HepG2 (cell line): ENCODE measurements at regions of chr2 and their contacts with region 1.

Region 1: GRCh38 chr2:226799181-226799975 is at the start of gene IRS1:
- DNase-seq: peak; percentile 66
- ATAC-seq: peak; percentile 65
- H3K4me3 ChIP-seq: peak within 1 kb of the TSS; percentile 59 to 72 (median 62)
- H3K27ac ChIP-seq: peak within 1 kb of the TSS; percentile 96
- H3K4me1 ChIP-seq: peaks cover 79% of the 10 kb centered on the region
- H3K27me3 ChIP-seq: no peaks in the 10 kb centered on the region
- CTCF ChIP-seq: no peak
- EP300 ChIP-seq: peak in 1 of 2 experiments; percentile 50; a peak in 2 of 4 replicates
- POLR2A ChIP-seq: no peak
- RAD21 ChIP-seq: peak; percentile 93
- total RNA-seq, gene IRS1: 7.9 and 8.7 TPM in 2 replicates

Region 2: DNA sequence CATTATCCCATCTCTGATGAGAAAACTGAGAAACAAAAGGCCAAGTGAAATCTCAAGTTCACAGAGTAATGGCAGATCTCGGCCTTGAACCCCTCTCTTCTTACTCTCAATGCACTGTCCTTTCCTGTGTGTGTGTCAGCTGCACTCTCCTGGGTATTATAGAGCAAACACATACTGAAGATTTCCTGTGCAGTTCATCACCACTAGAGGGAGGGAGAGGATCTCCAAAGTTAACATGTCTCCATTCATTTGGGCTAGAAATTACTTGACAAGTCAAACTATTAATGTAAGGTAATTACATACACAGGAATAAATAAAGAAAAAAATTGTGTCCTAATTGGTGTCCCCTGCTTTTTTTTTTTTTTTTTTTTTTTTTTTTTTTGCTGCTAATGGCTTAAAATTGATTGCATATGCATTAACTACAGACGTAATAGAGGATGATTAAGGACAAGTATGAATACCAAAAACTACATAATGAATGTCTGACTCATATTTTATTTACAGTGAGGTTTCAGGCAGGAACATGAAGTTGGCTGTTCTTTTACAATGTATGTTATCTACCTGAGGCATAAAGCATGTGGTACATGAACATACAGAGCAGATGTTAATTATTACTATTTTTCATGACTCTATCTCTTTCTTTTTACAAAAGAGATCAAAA is 1130.6 kb before region 1 on chr2:
- CTCF ChIA-PET with region 1: interaction called, 7 read pairs
- POLR2A ChIA-PET with region 1: interaction called, 3 read pairs
- in situ Hi-C with region 1: loop called (anchors 5 kb)
- intact Hi-C with region 1: loop called (anchors 1 kb)
- DNase-seq: peak; percentile 65
- ATAC-seq: peak; percentile 95
- H3K4me3 ChIP-seq: no peak overlapping the region
- H3K27ac ChIP-seq: no peak overlapping the region
- H3K4me1 ChIP-seq: no peaks in the 10 kb centered on the region
- H3K27me3 ChIP-seq: no peaks in the 10 kb centered on the region
- CTCF ChIP-seq: peak; percentile 85
- EP300 ChIP-seq: no peak
- POLR2A ChIP-seq: no peak
- RAD21 ChIP-seq: 0 out of 2 replicates have a peak, but pooled peaks have one; percentile 31

Region 3: DNA sequence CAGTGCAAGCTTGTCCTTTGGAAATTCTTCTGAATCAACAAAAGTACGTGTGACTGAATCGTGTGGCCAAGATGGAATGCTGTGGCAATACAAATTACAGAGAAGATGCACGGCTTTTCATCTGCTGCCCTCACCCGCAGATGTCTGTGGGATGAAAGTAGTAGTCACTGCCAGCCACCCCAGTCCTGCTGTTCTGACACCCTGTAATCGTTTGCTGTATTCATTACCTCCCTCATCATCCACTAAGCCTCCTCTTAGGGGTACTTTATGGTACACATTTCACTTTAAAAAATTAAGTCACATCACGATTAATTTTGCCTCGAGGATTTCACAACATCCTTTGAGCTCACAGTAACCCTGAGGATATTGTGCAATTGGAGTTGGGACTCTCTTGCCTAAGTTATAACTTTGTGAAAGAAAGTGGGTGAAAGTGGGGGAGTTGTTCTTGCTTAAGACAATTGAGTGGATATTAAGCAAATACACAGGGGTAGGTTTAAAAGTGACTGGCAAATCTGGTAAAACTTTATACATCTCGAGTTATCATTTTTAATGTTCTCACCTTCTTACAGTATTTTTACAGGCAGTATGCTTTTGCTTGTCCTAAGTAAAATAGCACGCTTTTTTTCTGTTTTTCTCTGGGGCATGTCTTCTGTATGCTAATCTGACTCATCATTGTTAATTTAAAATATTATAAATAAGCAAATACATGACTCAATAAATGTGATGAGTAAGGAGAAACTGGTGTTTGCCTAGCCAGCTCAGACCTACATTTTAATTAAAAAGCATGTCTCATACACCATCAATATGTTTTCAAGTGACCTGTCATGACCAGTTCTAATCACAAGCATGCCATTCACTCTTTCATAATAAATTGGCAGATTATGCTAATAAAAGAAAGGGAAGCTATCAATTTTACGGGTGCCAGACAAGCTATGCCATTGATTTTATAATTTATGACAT is 680.6 kb before region 1 on chr2:
- CTCF ChIA-PET with region 1: no interaction called
- POLR2A ChIA-PET with region 1: interaction called, 13 read pairs
- in situ Hi-C with region 1: no loop called
- intact Hi-C with region 1: loop called (anchors 2 kb)
- DNase-seq: peak; percentile 81
- ATAC-seq: peak; percentile 81
- H3K4me3 ChIP-seq: peak overlapping the region; percentile 42 to 51 (median 42); a peak in 5 of 6 replicates
- H3K27ac ChIP-seq: peak overlapping the region; percentile 54
- H3K4me1 ChIP-seq: peaks cover 65% of the 10 kb centered on the region
- H3K27me3 ChIP-seq: no peaks in the 10 kb centered on the region
- CTCF ChIP-seq: no peak
- EP300 ChIP-seq: peak; percentile 88 to 94; a peak in 3 of 4 replicates
- POLR2A ChIP-seq: no peak
- RAD21 ChIP-seq: no peak

Region 4: DNA sequence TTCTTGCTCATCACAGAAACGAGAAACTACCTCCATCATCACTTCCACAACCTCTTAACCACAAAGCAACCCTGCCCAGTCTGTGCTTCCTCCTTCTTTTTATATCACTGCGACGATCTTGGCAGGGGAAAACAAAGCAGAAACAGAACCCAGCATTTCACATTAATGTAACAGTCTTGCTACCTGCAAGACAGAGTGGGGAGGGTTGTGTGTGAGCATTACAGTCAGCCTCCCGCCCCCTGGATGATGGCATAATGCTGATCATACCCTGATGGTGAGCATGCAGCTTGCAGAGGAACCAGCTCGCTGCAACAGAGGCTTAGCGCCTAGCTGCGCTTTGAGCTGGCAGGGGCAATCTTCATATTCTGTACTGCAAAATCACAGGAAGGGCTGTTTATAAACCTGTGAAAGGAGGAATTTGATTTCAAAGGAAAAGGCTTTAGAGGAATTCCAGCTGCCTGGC is 375.8 kb before region 1 on chr2:
- CTCF ChIA-PET with region 1: no interaction called
- POLR2A ChIA-PET with region 1: interaction called, 3 read pairs
- in situ Hi-C with region 1: no loop called
- intact Hi-C with region 1: loop called (anchors 10 kb)
- DNase-seq: no peak
- ATAC-seq: no peak
- H3K4me3 ChIP-seq: no peak overlapping the region
- H3K27ac ChIP-seq: no peak overlapping the region
- H3K4me1 ChIP-seq: peaks cover 24% of the 10 kb centered on the region
- H3K27me3 ChIP-seq: no peaks in the 10 kb centered on the region
- CTCF ChIP-seq: no peak
- EP300 ChIP-seq: no peak
- POLR2A ChIP-seq: no peak
- RAD21 ChIP-seq: no peak

Region 5: DNA sequence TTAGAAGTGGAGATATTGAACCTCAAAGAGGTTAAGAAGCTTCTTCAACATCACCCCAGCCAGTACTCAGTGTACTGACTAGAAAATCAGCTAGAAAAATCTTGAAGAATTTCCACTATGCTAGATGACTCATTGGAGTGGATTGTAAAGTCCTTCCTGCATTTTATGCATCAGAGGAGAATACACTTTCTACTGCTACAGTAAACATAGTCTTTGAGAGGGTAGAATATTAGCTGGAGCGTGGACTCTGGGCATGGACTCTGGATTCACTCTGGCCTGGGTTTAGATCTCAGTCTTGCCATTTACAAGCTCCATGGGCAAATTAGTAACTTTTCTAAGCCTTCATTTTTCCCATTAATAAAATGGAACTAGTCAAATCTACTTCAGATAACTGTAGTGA is 215.7 kb before region 1 on chr2:
- CTCF ChIA-PET with region 1: interaction called, 3 read pairs
- POLR2A ChIA-PET with region 1: interaction called, 19 read pairs
- in situ Hi-C with region 1: no loop called
- intact Hi-C with region 1: loop called (anchors 5 kb)
- DNase-seq: peak; percentile 94
- ATAC-seq: peak; percentile 98
- H3K4me3 ChIP-seq: no peak overlapping the region
- H3K27ac ChIP-seq: peak overlapping the region; percentile 68
- H3K4me1 ChIP-seq: peaks cover 65% of the 10 kb centered on the region
- H3K27me3 ChIP-seq: no peaks in the 10 kb centered on the region
- CTCF ChIP-seq: no peak
- EP300 ChIP-seq: peak in 1 of 2 experiments; percentile 94; a peak in 2 of 4 replicates
- POLR2A ChIP-seq: no peak
- RAD21 ChIP-seq: no peak; the same call in 1 of the 2 replicates

Region 6: GRCh38 chr2:226733189-226733858 is 66.1 kb before region 1 on chr2:
- CTCF ChIA-PET with region 1: no interaction called
- POLR2A ChIA-PET with region 1: interaction called, 53 read pairs
- in situ Hi-C with region 1: loop called (anchors 10 kb)
- intact Hi-C with region 1: loop called (anchors 1 kb)
- DNase-seq: peak; percentile 98
- ATAC-seq: peak; percentile 92
- H3K4me3 ChIP-seq: peak overlapping the region in 2 of 3 experiments; percentile 27 to 45; a peak in 2 of 6 replicates
- H3K27ac ChIP-seq: peak overlapping the region; percentile 82
- H3K4me1 ChIP-seq: peaks cover 75% of the 10 kb centered on the region
- H3K27me3 ChIP-seq: no peaks in the 10 kb centered on the region
- CTCF ChIP-seq: peak; percentile 31; the same call in 1 of the 2 replicates
- EP300 ChIP-seq: peak; percentile 87 to 99
- POLR2A ChIP-seq: 0 out of 4 replicates have a peak, but pooled peaks of 1 of the 2 experiments have one; percentile 25
- RAD21 ChIP-seq: peak; percentile 31; the same call in 1 of the 2 replicates

Region 7: DNA sequence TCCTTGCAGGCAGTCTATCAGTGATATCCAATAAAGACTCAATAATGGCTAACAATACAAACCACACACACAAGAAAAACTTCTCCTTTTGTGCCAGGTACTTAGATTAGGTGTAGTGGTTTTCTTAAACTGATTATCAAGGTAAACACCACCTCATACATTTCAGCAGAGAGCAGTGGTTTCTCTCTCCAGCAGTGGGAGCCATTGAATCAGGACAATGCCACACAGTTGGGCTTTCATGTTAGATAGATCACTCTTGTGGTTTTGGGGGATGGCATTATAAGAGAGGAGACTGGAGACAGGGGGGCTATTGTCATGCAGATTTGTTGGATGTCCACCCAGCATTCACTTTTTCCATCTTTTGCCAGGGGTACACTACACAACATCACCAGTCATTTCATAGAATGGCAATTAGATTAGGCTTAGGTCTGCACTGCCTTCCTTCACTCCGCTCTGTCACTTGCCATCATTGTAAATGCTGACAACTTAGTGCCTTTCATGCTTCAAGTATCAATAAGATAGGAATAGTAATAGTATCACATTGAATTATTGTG is 13.8 kb after region 1 on chr2:
- CTCF ChIA-PET with region 1: no interaction called
- POLR2A ChIA-PET with region 1: no interaction called
- in situ Hi-C with region 1: no loop called
- intact Hi-C with region 1: no loop called
- DNase-seq: no peak
- ATAC-seq: peak; percentile 71
- H3K4me3 ChIP-seq: no peak overlapping the region
- H3K27ac ChIP-seq: no peak overlapping the region
- H3K4me1 ChIP-seq: no peaks in the 10 kb centered on the region
- H3K27me3 ChIP-seq: no peaks in the 10 kb centered on the region; a peak in 1 of 5 replicates
- CTCF ChIP-seq: peak; percentile 57
- EP300 ChIP-seq: no peak
- POLR2A ChIP-seq: no peak
- RAD21 ChIP-seq: 0 out of 2 replicates have a peak, but pooled peaks have one; percentile 34

Region 8: DNA sequence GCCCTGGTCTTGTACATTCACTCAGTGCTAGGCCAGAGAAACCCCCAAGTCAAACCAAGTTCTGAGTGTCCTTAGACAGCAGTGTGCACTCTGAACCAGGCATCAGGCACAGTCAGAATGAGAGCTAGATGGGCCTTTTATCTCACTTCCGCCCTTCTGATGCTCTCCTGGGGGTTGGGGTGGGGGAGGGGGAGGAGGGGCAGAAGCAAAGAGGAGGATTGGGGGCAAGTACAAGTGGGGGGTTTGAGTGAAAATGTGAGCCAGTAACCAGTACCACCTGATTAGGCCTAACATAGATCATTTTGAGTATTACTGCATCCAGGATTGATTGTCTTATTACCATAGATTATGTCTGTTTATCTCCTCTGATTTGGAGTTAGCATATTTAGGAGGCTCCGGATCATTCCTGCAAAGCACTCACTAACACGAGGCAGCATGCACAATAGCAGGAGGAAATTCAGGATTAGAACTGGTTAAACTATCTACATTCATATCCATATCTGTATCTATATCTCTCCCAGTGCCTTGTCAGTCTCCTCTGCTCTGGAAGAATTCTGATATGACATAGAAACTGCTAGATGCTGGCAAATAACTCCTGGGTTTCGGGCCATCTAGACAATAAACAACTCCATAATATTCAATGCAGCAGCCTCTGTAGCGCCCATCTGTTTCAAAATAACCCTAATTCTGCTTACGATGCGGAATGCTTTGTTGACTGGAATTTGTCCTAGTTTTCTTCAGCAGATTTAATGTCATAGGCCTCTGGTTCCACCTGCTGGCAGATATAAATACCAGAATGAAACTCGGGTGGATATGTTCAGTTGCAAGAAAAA is 185.6 kb after region 1 on chr2:
- CTCF ChIA-PET with region 1: interaction called, 9 read pairs
- POLR2A ChIA-PET with region 1: interaction called, 4 read pairs
- in situ Hi-C with region 1: no loop called
- intact Hi-C with region 1: loop called (anchors 1 kb)
- DNase-seq: peak; percentile 72
- ATAC-seq: peak; percentile 87
- H3K4me3 ChIP-seq: no peak overlapping the region
- H3K27ac ChIP-seq: no peak overlapping the region
- H3K4me1 ChIP-seq: peaks cover 17% of the 10 kb centered on the region
- H3K27me3 ChIP-seq: no peaks in the 10 kb centered on the region
- CTCF ChIP-seq: peak; percentile 82
- EP300 ChIP-seq: no peak
- POLR2A ChIP-seq: no peak
- RAD21 ChIP-seq: peak; percentile 88